Activated B cell treated with CpG ODN at 0.5 μM for 24 hours (primary cell): ENCODE measurements at regions of chr5 and their contacts with region 1.

Region 1: GRCh38 chr5:141430332-141431113 is at the start of gene PCDHGA12:
- DNase-seq: no peak
- ATAC-seq: peak; percentile 86
- H3K4me3 Mint-ChIP-seq: peak within 1 kb of the TSS; percentile 80
- H3K27ac Mint-ChIP-seq: peak within 1 kb of the TSS; percentile 76
- H3K4me1 Mint-ChIP-seq: peaks cover 16% of the 10 kb centered on the region
- H3K27me3 Mint-ChIP-seq: peaks cover 46% of the 10 kb centered on the region
- CTCF ChIP-seq: no peak
- total RNA-seq, gene PCDHGA12: 1.3 and 1.6 TPM in 2 replicates

Region 2: DNA sequence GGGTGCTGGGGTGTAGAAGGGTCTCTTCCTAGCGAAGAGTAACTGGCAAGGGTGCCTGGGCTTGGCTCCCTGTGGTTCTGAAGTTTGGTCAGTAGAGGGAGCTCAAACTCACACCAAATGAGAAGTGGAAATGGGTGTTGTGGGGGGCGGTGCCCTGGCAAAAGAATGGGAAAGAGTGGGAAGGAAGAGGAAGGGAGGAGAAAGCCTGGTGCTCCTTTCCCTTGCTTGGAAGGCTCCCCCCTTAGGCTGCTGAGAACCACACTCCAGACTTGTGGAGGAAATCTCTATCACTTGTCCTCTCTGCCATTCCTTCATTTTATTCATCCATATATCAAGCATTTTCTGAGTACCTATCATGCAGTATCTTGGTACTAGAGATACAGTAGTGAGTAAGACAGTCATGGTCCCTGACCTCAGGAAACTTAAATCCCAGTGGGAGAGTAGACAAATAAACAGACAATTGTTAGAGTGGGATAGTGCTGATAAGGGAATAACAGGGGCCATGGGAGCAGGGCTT is 1057.5 kb before region 1 on chr5:
- CTCF ChIA-PET with region 1: no interaction called
- POLR2A ChIA-PET with region 1: no interaction called
- intact Hi-C with region 1: no loop called
- DNase-seq: no peak
- ATAC-seq: peak; percentile 70
- H3K4me3 Mint-ChIP-seq: no peak overlapping the region
- H3K27ac Mint-ChIP-seq: peak overlapping the region; percentile 18
- H3K4me1 Mint-ChIP-seq: peaks cover 7% of the 10 kb centered on the region
- H3K27me3 Mint-ChIP-seq: no peaks in the 10 kb centered on the region
- CTCF ChIP-seq: peak; percentile 80

Region 3: DNA sequence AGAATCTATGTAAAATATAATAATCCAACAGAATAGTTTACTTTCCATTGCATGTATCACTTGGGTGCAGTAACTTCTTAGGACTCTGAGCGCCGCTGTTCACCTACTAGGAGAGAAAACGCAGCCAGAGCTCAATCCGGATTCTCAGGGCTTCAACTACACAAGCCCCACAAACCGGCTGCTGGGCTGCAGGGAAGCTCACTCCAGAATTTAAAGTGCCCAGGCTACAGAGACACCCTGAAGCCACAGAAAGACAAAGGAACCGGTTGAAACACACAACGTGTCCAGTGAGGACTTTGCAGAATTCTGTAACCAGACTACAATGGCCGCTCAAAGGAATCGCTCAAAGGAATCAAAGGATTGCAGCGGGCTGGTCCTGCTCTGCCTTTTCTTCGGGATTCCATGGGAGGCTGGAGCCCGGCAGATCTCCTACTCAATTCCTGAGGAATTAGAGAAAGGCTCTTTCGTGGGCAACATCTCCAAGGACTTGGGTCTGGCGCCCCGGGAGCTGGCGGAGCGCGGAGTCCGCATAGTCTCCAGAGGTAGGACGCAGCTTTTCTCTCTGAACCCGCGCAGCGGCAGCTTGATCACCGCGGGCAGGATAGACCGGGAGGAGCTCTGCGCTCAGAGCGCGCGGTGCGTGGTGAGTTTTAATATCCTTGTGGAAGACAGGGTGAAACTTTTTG is 17.5 kb before region 1 on chr5 and contains the start of gene PCDHGA10:
- CTCF ChIA-PET with region 1: interaction called, 11 read pairs
- POLR2A ChIA-PET with region 1: no interaction called
- intact Hi-C with region 1: no loop called
- DNase-seq: no peak
- ATAC-seq: peak; percentile 66
- H3K4me3 Mint-ChIP-seq: peak within 1 kb of the TSS; percentile 86
- H3K27ac Mint-ChIP-seq: peak within 1 kb of the TSS; percentile 41
- H3K4me1 Mint-ChIP-seq: peaks cover 21% of the 10 kb centered on the region
- H3K27me3 Mint-ChIP-seq: peaks cover 52% of the 10 kb centered on the region
- CTCF ChIP-seq: no peak
- total RNA-seq, gene PCDHGA10: 1.2 and 1.3 TPM in 2 replicates

Region 4: GRCh38 chr5:141475625-141476131 is 45.2 kb after region 1 on chr5 and contains the start of gene PCDHGC3:
- CTCF ChIA-PET with region 1: interaction called, 9 read pairs
- POLR2A ChIA-PET with region 1: no interaction called
- intact Hi-C with region 1: loop called (anchors 2 kb)
- DNase-seq: no peak
- ATAC-seq: peak; percentile 96
- H3K4me3 Mint-ChIP-seq: peak within 1 kb of the TSS; percentile 93
- H3K27ac Mint-ChIP-seq: peak within 1 kb of the TSS; percentile 32
- H3K4me1 Mint-ChIP-seq: peaks cover 28% of the 10 kb centered on the region
- H3K27me3 Mint-ChIP-seq: peaks cover 32% of the 10 kb centered on the region
- CTCF ChIP-seq: no peak
- total RNA-seq, gene PCDHGC3: 2.6 and 3.3 TPM in 2 replicates